Naive thymus-derived CD8-positive, alpha-beta T cell (primary cell): ENCODE measurements at regions of chr2 and their contacts with region 1.

Region 1: GRCh38 chr2:108533832-108534583 is at the start of gene LIMS1:
- DNase-seq: peak; percentile 61 to 93 (median 82)
- ATAC-seq: peak; percentile 86 to 92
- H3K4me3 Mint-ChIP-seq: peak within 1 kb of the TSS; percentile 87 to 98 (median 95)
- H3K27ac Mint-ChIP-seq: peak within 1 kb of the TSS; percentile 74 to 94 (median 90)
- H3K4me1 Mint-ChIP-seq: peaks cover 11 to 28% (median 28%) of the 10 kb centered on the region in 4 donors
- H3K27me3 Mint-ChIP-seq: no peaks in the 10 kb centered on the region
- polyA plus RNA-seq, gene LIMS1: 21.8 to 25.9 (median 21.9) TPM

Region 2: GRCh38 chr2:108448678-108449493 is 85.1 kb before region 1 on chr2 and contains the start of gene GCC2:
- POLR2A ChIA-PET with region 1: interaction called, 12 read pairs
- DNase-seq: peak; percentile 93 to 98 (median 96)
- ATAC-seq: peak; percentile 90 to 93
- H3K4me3 Mint-ChIP-seq: peak within 1 kb of the TSS; percentile 91 to 99 (median 98)
- H3K27ac Mint-ChIP-seq: peak within 1 kb of the TSS; percentile 97 to 100 (median 99)
- H3K4me1 Mint-ChIP-seq: peaks cover 18 to 48% (median 42%) of the 10 kb centered on the region in 4 donors
- H3K27me3 Mint-ChIP-seq: no peaks in the 10 kb centered on the region
- polyA plus RNA-seq, gene GCC2: 51.5 to 100 (median 65.0) TPM

Region 3: GRCh38 chr2:108719149-108720044 is 185.4 kb after region 1 on chr2 and contains the start of gene RANBP2:
- POLR2A ChIA-PET with region 1: no interaction called
- DNase-seq: peak; percentile 87 to 97 (median 94)
- ATAC-seq: peak; percentile 89 to 93
- H3K4me3 Mint-ChIP-seq: peak within 1 kb of the TSS; percentile 91 to 98 (median 96)
- H3K27ac Mint-ChIP-seq: peak within 1 kb of the TSS; percentile 98 to 100 (median 99)
- H3K4me1 Mint-ChIP-seq: peaks cover 7 to 32% (median 28%) of the 10 kb centered on the region in 4 donors
- H3K27me3 Mint-ChIP-seq: no peaks in the 10 kb centered on the region
- polyA plus RNA-seq, gene RANBP2: 7.9 to 15.6 (median 12.8) TPM